ENCODE measurements at regions of chr10 and their contacts with region 1.

Region 1: DNA sequence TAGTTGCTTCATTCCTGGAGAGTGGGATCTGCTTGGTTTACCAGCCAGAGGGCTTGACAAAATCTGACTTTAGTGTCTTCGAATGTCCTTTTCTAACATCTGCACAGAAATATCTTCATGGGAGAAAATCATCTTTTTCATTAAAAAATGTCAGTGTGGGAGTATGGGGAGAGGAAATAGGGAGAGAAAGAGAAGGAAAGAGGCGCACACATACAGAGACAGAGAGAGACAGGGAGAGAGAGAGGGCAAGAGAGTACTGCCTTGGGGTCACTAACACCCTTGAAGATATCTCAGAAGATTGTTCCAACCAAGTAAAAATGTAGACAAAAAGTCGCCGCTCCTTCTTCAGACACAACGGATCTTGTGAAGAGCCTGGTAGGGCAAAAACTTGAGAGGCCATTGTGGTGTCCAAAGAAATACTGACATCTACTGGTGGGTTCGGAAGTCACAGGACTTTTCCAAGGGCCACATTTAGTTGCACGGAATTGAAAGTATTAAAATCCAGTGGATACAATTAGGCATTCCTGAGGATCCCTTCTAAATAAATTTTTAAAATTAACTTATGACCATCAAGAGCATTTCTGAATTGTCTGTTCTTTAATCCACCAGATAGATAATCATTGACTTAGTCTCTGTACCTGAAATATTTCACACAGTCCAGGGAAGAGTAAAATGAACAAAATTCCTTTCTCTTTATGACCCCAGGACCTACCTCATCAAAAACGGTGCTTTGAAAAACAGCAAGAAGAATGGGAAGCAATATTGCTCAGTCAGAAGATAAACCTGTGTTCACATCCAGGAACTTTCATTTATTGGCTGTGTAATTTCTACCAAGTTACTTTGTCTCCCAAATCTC is 29.7 kb downstream of the VIM start:
- DNase-seq: peak; percentile 64
- H3K4me3 Mint-ChIP-seq: peak overlapping the region; percentile 43
- H3K27ac Mint-ChIP-seq: peak overlapping the region; percentile 19
- H3K4me1 Mint-ChIP-seq: peaks cover 9% of the 10 kb centered on the region
- H3K27me3 Mint-ChIP-seq: peaks cover 23% of the 10 kb centered on the region
- CTCF ChIP-seq: peak; percentile 76

Region 2: GRCh38 chr10:16828114-16828568 is 429.6 kb before region 1 on chr10:
- CTCF ChIA-PET with region 1: no interaction called
- intact Hi-C with region 1: loop called (anchors 1 kb)
- DNase-seq: peak; percentile 70
- H3K4me3 Mint-ChIP-seq: no peak overlapping the region
- H3K27ac Mint-ChIP-seq: no peak overlapping the region
- H3K4me1 Mint-ChIP-seq: peaks cover 35% of the 10 kb centered on the region
- H3K27me3 Mint-ChIP-seq: no peaks in the 10 kb centered on the region
- CTCF ChIP-seq: peak; percentile 40

Region 3: DNA sequence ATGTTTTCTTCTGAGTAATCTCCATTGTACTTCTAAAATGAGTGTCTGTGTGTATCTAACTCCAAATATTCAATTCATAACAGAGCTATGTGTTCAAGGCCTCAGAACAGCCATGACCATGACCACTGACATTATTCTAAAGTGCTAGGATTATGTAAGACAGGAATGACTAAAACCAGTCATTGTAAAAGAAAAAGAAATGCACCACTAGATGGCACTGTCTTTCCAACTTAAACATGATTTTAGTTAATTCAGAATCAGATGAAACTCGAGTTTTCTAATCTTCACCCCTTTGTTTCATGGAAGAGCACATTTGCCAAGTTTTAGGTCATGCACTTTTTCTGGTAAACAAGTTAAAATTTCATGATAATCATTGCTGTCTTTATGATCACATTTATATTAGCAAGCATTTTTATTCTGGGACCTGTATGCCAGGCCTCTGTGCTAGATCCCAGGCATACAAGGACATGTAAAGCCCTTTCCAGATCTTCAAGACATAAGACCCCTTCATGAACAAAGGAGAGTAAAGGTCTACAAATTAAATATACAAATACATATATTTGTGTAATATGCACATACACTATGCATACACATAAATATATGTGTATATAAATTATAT is 414.3 kb before region 1 on chr10:
- CTCF ChIA-PET with region 1: interaction called, 3 read pairs
- intact Hi-C with region 1: loop called (anchors 1 kb)
- DNase-seq: peak; percentile 11
- H3K4me3 Mint-ChIP-seq: no peak overlapping the region
- H3K27ac Mint-ChIP-seq: no peak overlapping the region
- H3K4me1 Mint-ChIP-seq: no peaks in the 10 kb centered on the region
- H3K27me3 Mint-ChIP-seq: peaks cover 23% of the 10 kb centered on the region
- CTCF ChIP-seq: peak; percentile 27

Measured in Calu3 (cell line).